Adrenal gland (tissue), 19 donors: ENCODE measurements at regions of chr11 and their contacts with region 1.

Region 1: GRCh38 chr11:128630367-128631230 is 43.2 kb upstream of the ETS1 start:
- DNase-seq: peak; percentile 80 to 93 (median 85)
- H3K4me3 ChIP-seq: no peak overlapping the region
- H3K27ac ChIP-seq: no peak overlapping the region
- H3K4me1 ChIP-seq: peaks cover 0 to 3% of the 10 kb centered on the region in 2 donors
- H3K27me3 ChIP-seq: no peaks in the 10 kb centered on the region
- CTCF ChIP-seq: peak; percentile 83 to 93 (median 88)
- POLR2A ChIP-seq: no peak

Region 2: GRCh38 chr11:128290106-128290840 is 340.3 kb before region 1 on chr11:
- intact Hi-C with region 1: loop called (anchors 2 to 5 kb)
- DNase-seq: peak; percentile 50 to 78 (median 57)
- H3K4me3 ChIP-seq: no peak overlapping the region
- H3K27ac ChIP-seq: peak overlapping the region in 2 of 5 donors; percentile 2 to 29
- H3K4me1 ChIP-seq: no peaks in the 10 kb centered on the region
- H3K27me3 ChIP-seq: peaks cover 3% of the 10 kb centered on the region
- CTCF ChIP-seq: peak; percentile 81 to 92 (median 86)
- POLR2A ChIP-seq: no peak